Gastrocnemius medialis (tissue), 4 donors: ENCODE measurements at regions of chr11 and their contacts with region 1.

Region 1: GRCh38 chr11:12673924-12674570 is at the start of gene TEAD1:
- DNase-seq: peak; percentile 92 to 94
- ATAC-seq: peak; percentile 81 to 82
- H3K4me3 ChIP-seq: peak within 1 kb of the TSS; percentile 68 to 85 (median 72)
- H3K27ac ChIP-seq: peak within 1 kb of the TSS; percentile 88 to 96 (median 93)
- H3K4me1 ChIP-seq: peaks cover 31% of the 10 kb centered on the region in 2 donors
- H3K27me3 ChIP-seq: no peaks in the 10 kb centered on the region
- CTCF ChIP-seq: peak in 4 of 5 experiments; percentile 6 to 16 (median 14)
- POLR2A ChIP-seq: peak; percentile 73 to 88
- total RNA-seq, gene TEAD1: 46.1 to 175 (median 126) TPM

Region 2: DNA sequence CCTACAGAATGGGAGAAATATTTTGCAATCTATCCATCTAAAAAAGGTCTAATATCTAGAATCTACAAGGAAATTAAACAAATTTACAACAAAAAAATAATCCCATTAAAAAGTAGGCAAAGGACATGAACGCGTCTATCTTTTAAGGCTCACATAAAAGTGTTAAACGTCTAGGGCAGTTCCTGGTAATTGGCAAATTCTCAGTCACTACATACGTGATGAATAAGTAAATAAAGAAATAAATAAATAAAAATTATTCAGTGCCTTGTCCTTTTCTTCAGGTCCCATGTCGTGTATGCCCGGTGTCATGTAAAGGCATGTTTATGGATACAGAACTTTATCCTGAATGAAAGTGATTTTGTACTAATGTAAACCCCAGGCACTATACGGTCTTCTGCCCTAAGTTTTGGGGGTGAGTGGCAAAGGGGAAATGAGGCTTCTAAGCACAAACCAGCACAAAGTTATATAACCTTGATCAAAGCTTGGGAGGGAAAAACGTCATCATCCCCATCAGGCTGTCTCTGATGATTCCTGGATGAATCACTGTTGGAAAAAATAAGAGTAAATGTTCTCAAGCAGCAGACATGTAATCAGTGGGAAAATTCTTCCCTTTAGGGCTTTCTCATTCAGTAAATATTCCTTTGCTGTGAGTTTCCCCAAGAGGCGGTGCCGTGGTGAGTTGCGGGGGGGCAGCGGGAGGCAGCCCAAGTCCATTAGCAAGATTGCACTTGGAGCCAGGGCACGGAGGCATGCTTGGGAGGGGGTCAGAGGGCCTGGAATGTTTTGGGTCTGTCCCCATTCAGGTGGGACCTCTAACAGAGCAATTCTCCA is 594.1 kb before region 1 on chr11:
- in situ Hi-C with region 1: no loop called
- intact Hi-C with region 1: loop called (anchors 10 kb)
- DNase-seq: peak in 1 of 2 donors; percentile 56
- ATAC-seq: peak in 1 of 2 donors; percentile 7
- H3K4me3 ChIP-seq: no peak overlapping the region
- H3K27ac ChIP-seq: peak overlapping the region in 3 of 4 donors; percentile 35 to 68 (median 54)
- H3K4me1 ChIP-seq: peaks cover 20 to 22% of the 10 kb centered on the region in 2 donors
- H3K27me3 ChIP-seq: peaks cover 0 to 10% (median 0%) of the 10 kb centered on the region in 3 donors
- CTCF ChIP-seq: no peak
- POLR2A ChIP-seq: no peak

Region 3: GRCh38 chr11:12599408-12600143 is 74.5 kb before region 1 on chr11:
- in situ Hi-C with region 1: loop called in 1 of 4 experiments (anchors 10 kb)
- intact Hi-C with region 1: no loop called
- DNase-seq: peak in 1 of 2 donors; percentile 36
- ATAC-seq: peak; percentile 65 to 86
- H3K4me3 ChIP-seq: no peak overlapping the region
- H3K27ac ChIP-seq: no peak overlapping the region
- H3K4me1 ChIP-seq: peaks cover 0 to 6% of the 10 kb centered on the region in 2 donors
- H3K27me3 ChIP-seq: no peaks in the 10 kb centered on the region
- CTCF ChIP-seq: peak; percentile 48 to 82 (median 66)
- POLR2A ChIP-seq: no peak

Region 4: GRCh38 chr11:12717851-12718291 is 43.8 kb after region 1 on chr11:
- in situ Hi-C with region 1: no loop called
- intact Hi-C with region 1: no loop called
- DNase-seq: no peak
- ATAC-seq: no peak
- H3K4me3 ChIP-seq: no peak overlapping the region
- H3K27ac ChIP-seq: no peak overlapping the region
- H3K4me1 ChIP-seq: peaks cover 67 to 92% of the 10 kb centered on the region in 2 donors
- H3K27me3 ChIP-seq: no peaks in the 10 kb centered on the region
- CTCF ChIP-seq: no peak
- POLR2A ChIP-seq: no peak

Region 5: DNA sequence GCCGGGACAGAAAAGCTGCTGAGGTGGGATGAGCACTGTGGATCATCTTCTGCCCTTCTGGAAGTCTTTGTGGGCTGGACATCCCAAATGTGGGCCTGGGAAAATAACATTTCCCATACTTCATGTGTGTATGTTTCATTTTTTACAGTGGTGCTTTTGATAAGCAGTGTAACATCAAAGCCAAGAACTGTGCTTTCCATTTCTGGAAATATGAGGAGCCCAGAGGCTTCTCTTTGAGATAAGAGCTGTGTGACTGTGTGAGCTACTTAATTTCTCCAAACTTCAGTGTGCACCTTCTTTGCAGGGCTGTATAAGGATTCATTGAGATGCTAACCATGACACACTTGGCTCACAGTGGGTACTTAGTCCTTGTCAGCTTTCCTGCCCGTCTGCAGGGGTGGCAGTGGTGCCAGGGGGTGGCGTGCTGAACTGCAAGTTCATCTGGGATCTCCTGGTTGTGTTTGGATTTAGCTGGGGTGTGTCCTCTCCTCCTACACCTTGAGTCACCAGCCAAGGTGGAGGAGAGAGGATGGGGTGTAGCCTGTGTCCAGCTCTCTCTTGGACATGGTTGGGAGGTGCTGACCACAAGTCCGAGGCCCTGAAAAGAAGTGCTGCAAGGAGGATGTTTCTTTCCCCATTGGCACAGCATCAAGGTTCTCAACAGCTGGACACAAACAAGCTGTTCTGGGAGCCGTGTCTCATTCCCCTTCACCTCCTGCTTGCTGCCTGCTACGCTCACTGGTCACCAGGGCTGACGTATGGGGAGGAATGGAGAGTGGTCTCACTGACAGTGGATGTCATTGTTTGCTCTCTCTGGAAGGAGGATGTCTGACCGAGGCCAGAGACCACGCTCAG is 139.6 kb after region 1 on chr11:
- in situ Hi-C with region 1: loop called in 3 of 4 experiments (anchors 10 to 25 kb)
- intact Hi-C with region 1: loop called (anchors 2 kb)
- DNase-seq: peak; percentile 54 to 72
- ATAC-seq: peak; percentile 25 to 36
- H3K4me3 ChIP-seq: no peak overlapping the region
- H3K27ac ChIP-seq: peak overlapping the region; percentile 83 to 91 (median 87)
- H3K4me1 ChIP-seq: peaks cover 77 to 86% of the 10 kb centered on the region in 2 donors
- H3K27me3 ChIP-seq: no peaks in the 10 kb centered on the region
- CTCF ChIP-seq: peak in 3 of 5 experiments; percentile 24 to 45 (median 31)
- POLR2A ChIP-seq: no peak

Region 6: DNA sequence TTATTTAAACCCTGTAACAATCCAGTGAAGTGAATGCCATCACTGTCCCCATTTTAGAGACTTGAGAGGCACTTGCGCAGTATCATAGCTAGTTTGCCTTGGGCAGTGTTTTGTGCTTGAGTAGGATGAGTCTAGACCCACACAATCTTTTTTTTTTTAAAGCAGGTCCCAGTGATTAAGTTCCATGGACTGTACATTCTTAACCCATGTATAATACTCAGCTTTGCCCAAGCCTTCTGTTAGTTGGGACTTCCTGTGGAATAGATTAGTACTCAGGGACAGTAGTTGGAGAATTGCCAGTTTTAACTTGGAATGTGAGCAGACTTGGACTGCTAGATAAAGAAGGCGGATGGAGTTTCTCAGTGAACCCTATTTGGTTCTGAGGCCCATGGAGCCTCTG is 226.4 kb after region 1 on chr11:
- in situ Hi-C with region 1: loop called in 2 of 4 experiments (anchors 5 to 25 kb)
- intact Hi-C with region 1: loop called (anchors 2 kb)
- DNase-seq: no peak
- ATAC-seq: no peak
- H3K4me3 ChIP-seq: no peak overlapping the region
- H3K27ac ChIP-seq: peak overlapping the region; percentile 88 to 93 (median 92)
- H3K4me1 ChIP-seq: peaks cover 42 to 61% of the 10 kb centered on the region in 2 donors
- H3K27me3 ChIP-seq: no peaks in the 10 kb centered on the region
- CTCF ChIP-seq: no peak
- POLR2A ChIP-seq: no peak

Region 7: GRCh38 chr11:13335319-13335718 is 661.3 kb after region 1 on chr11:
- in situ Hi-C with region 1: no loop called
- intact Hi-C with region 1: loop called (anchors 10 kb)
- DNase-seq: peak; percentile 23 to 59
- ATAC-seq: peak in 1 of 2 donors; percentile 35
- H3K4me3 ChIP-seq: no peak overlapping the region
- H3K27ac ChIP-seq: peak overlapping the region; percentile 1 to 68 (median 62)
- H3K4me1 ChIP-seq: peaks cover 97 to 100% of the 10 kb centered on the region in 2 donors
- H3K27me3 ChIP-seq: no peaks in the 10 kb centered on the region
- CTCF ChIP-seq: peak; percentile 50 to 82 (median 73)
- POLR2A ChIP-seq: no peak